ENCODE measurements at regions of chr3 and their contacts with region 1.

Region 1: GRCh38 chr3:64267721-64268604 is 42.7 kb upstream of the PRICKLE2 start:
- DNase-seq: peak; percentile 77

Region 2: DNA sequence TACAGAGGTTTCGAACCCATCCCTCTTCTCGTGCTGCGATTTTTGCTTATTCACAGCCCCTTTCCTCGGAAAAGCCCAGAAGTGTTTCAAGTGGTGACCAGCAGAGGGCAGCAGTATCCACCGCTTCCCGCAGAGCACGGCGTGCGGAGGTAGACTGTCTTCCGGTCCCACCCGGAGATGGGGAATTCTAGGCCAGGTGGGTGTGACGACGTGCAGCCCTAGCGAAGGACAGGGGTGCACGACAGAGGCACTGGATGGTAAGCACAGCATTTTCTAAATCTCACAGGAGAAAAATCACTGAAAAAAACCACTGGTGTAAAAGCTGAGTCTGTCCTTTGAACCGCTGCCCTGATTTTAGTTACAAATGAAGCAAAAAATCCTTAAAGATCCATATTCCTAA is 237.2 kb before region 1 on chr3:
- intact Hi-C with region 1: loop called (anchors 5 kb)
- DNase-seq: peak; percentile 90

Region 3: GRCh38 chr3:64187065-64187959 is 80.7 kb before region 1 on chr3:
- intact Hi-C with region 1: loop called (anchors 2 kb)
- DNase-seq: peak; percentile 81

Region 4: DNA sequence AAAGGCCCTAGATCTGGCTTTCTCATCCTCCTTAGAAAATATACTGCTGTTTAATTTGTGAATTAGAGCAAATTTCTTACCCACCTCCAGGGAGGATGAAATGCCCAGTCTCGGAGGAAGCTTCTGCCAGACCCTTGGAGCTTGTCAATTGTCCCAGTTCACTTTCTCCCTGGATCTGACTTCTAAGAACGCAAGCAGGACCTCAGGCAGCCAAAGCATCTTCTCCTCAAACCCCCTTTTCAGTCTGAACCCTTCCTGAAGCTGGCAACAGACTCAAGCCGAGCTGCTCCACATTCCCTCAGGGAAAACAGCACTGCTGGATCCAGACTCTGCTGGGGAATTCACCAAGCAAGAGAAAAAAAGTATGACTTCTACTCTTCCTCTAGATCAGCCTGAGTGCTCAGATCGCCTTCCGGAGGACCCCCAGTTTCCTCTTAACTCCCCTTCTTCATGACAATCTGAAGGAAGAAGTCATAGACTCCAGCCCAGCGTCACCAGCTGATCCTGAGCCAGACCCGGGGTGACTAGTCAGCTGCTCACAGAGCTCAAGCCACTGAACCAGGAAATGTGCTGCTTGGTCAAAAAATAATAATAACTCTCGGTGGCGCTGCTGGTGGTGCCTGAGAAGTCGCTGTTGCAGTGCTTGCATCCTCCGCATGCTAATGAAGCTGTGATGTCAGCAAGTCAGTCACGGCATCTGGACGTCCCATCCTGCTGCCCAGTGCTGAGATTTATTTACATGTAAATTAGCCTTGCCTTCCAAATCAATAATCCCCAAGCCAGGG is 42.9 kb before region 1 on chr3 and contains the start of gene PRICKLE2:
- intact Hi-C with region 1: loop called (anchors 2 kb)
- DNase-seq: peak; percentile 83
- total RNA-seq, gene PRICKLE2: 12.4 TPM

Region 5: DNA sequence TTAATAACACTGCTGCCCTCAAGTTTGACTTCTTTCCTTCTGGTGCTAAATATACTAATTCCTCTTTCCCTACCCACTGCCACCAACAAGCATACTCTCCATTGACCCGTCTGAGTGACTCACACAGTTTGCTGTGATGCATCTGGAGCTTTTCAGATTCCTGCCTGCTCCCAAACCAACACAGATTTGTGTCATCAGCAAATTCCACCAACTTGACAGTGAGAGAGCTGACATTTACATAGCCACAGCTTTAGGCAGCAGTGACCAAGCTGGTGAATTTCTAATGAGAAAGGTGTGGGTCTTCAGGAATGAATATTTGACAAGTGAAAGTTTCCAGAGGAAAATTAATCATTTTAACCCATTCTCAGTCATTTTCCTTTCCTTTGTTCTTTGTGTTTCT is 53.8 kb after region 1 on chr3:
- intact Hi-C with region 1: loop called (anchors 10 kb)
- DNase-seq: no peak

Measured in cardiac septum (tissue), 1 donor.